Head of caudate nucleus (tissue), 42 donors: ENCODE measurements at regions of chr7 and their contacts with region 1.

Region 1: GRCh38 chr7:28853834-28854749 is 104.0 kb downstream of the TRIL start:
- DNase-seq: peak; percentile 71 to 95 (median 88)

Region 2: DNA sequence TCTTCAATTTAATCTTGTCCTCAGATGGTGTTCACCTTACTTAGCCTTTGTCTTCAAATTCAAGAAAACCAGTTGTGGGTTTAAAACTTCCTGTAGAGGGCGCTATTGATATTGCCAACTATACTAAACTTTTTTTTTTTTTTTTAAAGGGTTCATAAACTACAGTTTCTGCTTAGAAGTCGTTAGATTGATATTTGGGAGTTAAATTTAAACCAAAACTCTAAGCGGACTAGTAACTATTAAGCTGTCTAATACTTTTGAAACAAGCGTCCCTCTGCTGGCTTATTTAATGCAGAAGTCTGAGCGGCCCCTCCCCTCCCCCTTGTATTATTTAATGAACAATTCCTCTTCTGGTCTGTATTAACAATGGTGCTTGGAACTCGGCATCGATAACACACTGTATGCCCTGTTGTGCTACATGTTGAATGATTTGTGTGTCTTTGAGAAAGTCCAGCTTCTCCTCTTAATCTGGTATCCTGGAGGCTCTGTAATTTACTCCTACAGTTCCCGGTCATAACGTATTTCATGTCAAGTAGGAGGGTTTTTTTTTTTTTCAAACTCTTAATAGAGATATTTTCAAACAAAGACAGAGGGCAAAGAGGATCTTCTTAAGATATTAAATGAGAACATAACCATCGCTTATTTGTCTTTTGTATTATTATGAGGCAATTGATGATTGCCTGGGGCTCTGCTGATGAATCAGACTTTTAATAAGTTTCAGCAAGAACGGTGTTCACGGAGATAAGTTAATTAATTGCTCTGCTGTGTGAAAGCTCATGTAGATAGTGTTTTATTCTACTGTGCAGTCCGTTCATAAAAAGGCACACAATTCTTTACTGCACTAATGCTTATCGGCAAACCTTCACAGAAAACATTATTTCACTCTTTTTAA is 464.3 kb before region 1 on chr7:
- intact Hi-C with region 1: loop called (anchors 5 kb)
- DNase-seq: peak in 15 of 42 donors; percentile 5 to 61 (median 27)

Region 3: GRCh38 chr7:28615091-28615490 is 239.0 kb before region 1 on chr7:
- intact Hi-C with region 1: loop called (anchors 10 kb)
- DNase-seq: peak in 26 of 42 donors; percentile 5 to 72 (median 28)

Region 4: GRCh38 chr7:28685644-28686417 is 168.3 kb before region 1 on chr7:
- intact Hi-C with region 1: loop called (anchors 2 kb)
- DNase-seq: peak; percentile 67 to 98 (median 93)